ENCODE measurements at regions of chrX and their contacts with region 1.

Region 1: GRCh38 chrX:100883654-100884053 is 9.5 kb upstream of the NOX1 start:
- DNase-seq: no peak
- ATAC-seq: no peak
- H3K4me3 ChIP-seq: no peak overlapping the region
- H3K27ac ChIP-seq: no peak overlapping the region
- H3K4me1 ChIP-seq: no peaks in the 10 kb centered on the region
- H3K27me3 ChIP-seq: no peaks in the 10 kb centered on the region
- CTCF ChIP-seq: no peak

Region 2: GRCh38 chrX:99887918-99888317 is 995.7 kb before region 1 on chrX:
- CTCF ChIA-PET with region 1: no interaction called
- POLR2A ChIA-PET with region 1: no interaction called
- in situ Hi-C with region 1: no loop called
- intact Hi-C with region 1: no loop called
- DNase-seq: no peak
- ATAC-seq: no peak
- H3K4me3 ChIP-seq: no peak overlapping the region
- H3K27ac ChIP-seq: no peak overlapping the region
- H3K4me1 ChIP-seq: no peaks in the 10 kb centered on the region
- H3K27me3 ChIP-seq: no peaks in the 10 kb centered on the region
- CTCF ChIP-seq: no peak

Region 3: DNA sequence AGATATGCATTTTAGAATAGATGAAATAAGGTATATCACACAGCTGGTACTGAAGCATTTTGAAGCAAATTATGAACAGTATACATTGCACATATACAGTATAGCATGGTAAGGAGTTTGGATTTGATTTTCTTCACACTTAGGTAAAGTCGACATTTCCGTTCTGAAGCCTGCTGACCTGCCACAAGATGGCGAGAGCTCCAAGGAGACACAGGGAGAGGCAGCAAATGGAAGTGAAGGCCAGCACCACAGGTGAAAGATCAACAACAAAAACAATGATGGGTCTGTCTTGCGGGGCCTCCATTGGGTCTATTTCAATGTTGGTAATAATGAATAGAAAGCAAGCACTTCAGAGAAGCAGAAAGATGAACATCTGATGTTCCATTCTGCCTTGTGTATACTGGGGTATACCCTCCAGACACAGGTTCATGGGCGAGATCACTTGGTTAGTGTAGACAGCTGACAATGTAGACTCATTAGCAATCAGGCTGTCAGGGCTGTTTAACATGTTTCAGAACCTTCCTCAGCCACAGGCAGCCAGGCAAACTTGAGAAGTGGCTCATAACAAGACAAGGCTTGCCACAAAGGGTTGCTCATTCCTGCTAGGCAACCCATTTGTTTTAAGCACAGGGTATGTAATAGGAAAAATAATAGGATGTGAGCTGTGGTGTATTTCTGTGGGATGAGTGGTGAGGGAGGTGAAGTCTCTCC is 11.9 kb after region 1 on chrX:
- CTCF ChIA-PET with region 1: no interaction called
- POLR2A ChIA-PET with region 1: interaction called, 10 read pairs
- in situ Hi-C with region 1: no loop called
- intact Hi-C with region 1: no loop called
- DNase-seq: no peak
- ATAC-seq: peak; percentile 91
- H3K4me3 ChIP-seq: no peak overlapping the region
- H3K27ac ChIP-seq: no peak overlapping the region
- H3K4me1 ChIP-seq: no peaks in the 10 kb centered on the region
- H3K27me3 ChIP-seq: no peaks in the 10 kb centered on the region
- CTCF ChIP-seq: peak; percentile 78

Region 4: GRCh38 chrX:101051549-101052302 is 168.1 kb after region 1 on chrX and contains the start of gene TRMT2B:
- CTCF ChIA-PET with region 1: interaction called, 10 read pairs
- POLR2A ChIA-PET with region 1: no interaction called
- in situ Hi-C with region 1: no loop called
- intact Hi-C with region 1: no loop called
- DNase-seq: peak; percentile 67
- ATAC-seq: peak; percentile 99
- H3K4me3 ChIP-seq: peak within 1 kb of the TSS; percentile 82 to 94
- H3K27ac ChIP-seq: peak within 1 kb of the TSS; percentile 97
- H3K4me1 ChIP-seq: peaks cover 9% of the 10 kb centered on the region; the same call in 1 of the 2 replicates
- H3K27me3 ChIP-seq: no peaks in the 10 kb centered on the region
- CTCF ChIP-seq: no peak
- total RNA-seq, gene TRMT2B: 39.7 TPM

Measured in Panc1 (cell line).